Activated CD4-positive, alpha-beta T cell treated with anti-CD3 and anti-CD28 coated beads for 36 hours (primary cell): ENCODE measurements at regions of chr6 and their contacts with region 1.

Region 1: GRCh38 chr6:106300944-106301343 is 24.6 kb downstream of the ATG5 start:
- DNase-seq: no peak
- ATAC-seq: no peak
- H3K4me3 Mint-ChIP-seq: no peak overlapping the region
- H3K27ac Mint-ChIP-seq: no peak overlapping the region
- H3K4me1 Mint-ChIP-seq: peaks cover 7% of the 10 kb centered on the region
- H3K27me3 Mint-ChIP-seq: no peaks in the 10 kb centered on the region

Region 2: GRCh38 chr6:105484238-105485161 is 816.4 kb before region 1 on chr6:
- CTCF ChIA-PET with region 1: no interaction called
- POLR2A ChIA-PET with region 1: no interaction called
- intact Hi-C with region 1: loop called in 1 of 2 experiments (anchors 5 kb)
- DNase-seq: no peak
- ATAC-seq: peak; percentile 59
- H3K4me3 Mint-ChIP-seq: no peak overlapping the region
- H3K27ac Mint-ChIP-seq: peak overlapping the region; percentile 16
- H3K4me1 Mint-ChIP-seq: peaks cover 18% of the 10 kb centered on the region
- H3K27me3 Mint-ChIP-seq: peaks cover 11% of the 10 kb centered on the region

Region 3: DNA sequence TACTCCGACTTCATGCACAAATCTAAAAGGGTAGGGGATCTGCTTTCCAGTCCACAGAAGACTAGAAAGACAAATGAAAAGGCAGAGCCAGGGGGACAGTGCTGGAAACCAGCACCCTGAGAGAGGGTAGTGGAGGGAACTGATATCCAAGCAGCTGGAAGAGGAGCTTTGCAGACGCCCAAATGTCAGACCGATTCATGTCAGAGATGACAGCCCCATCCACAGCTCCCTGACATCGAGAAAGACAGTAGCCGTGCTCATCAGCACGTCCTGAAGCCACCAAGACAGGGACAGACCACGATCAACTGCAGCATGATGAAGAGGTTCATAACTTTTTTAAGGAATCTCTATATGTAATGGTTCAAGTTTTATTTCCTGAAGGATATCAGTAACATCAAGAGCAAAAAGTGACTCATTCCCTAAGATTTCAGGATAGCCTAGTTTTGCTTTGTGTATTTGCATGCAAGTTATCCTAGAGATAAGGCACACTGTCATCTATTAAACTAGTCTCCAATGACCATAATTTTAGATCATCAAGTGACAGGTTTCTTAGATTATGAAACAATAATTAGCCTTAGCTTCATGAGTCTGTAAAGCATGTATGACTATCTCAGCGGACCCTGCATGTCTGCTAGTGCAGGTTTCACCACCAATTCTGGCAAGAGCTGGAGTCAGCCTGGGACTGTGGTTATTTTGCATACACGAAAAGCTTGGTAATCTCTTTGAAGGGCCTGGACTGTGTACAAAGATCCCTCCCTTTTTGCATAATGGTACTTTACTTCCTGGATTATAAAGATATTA is 171.8 kb before region 1 on chr6:
- CTCF ChIA-PET with region 1: no interaction called
- POLR2A ChIA-PET with region 1: no interaction called
- intact Hi-C with region 1: no loop called
- DNase-seq: no peak
- ATAC-seq: no peak
- H3K4me3 Mint-ChIP-seq: no peak overlapping the region
- H3K27ac Mint-ChIP-seq: no peak overlapping the region
- H3K4me1 Mint-ChIP-seq: peaks cover 23% of the 10 kb centered on the region
- H3K27me3 Mint-ChIP-seq: peaks cover 4% of the 10 kb centered on the region